ENCODE measurements at regions of chr4 and their contacts with region 1.

Region 1: DNA sequence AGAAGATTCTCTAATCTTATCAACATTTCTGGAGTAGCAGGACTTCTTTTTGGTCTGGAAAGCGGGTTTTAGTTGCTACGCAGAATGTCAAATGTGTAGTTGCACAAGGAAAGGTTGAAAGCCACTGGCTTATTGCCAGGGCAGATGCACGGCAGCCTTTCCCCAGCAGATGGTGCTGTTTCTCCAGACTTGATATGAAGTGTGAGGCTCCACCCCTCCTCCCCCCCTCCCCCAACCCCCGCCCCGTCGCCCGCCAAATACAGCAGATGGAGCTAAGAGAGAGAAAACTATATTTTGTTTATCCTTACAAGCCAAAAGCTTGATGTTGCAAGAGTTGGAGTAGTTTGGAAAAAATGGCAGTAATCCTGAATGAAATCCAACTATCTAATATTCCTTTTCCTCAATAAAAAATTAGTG is 32.0 kb downstream of the ENOPH1 start:
- ATAC-seq: peak; percentile 73 to 90 (median 86)
- H3K4me3 ChIP-seq: no peak overlapping the region
- H3K27ac ChIP-seq: no peak overlapping the region
- H3K4me1 ChIP-seq: no peaks in the 10 kb centered on the region

Region 2: DNA sequence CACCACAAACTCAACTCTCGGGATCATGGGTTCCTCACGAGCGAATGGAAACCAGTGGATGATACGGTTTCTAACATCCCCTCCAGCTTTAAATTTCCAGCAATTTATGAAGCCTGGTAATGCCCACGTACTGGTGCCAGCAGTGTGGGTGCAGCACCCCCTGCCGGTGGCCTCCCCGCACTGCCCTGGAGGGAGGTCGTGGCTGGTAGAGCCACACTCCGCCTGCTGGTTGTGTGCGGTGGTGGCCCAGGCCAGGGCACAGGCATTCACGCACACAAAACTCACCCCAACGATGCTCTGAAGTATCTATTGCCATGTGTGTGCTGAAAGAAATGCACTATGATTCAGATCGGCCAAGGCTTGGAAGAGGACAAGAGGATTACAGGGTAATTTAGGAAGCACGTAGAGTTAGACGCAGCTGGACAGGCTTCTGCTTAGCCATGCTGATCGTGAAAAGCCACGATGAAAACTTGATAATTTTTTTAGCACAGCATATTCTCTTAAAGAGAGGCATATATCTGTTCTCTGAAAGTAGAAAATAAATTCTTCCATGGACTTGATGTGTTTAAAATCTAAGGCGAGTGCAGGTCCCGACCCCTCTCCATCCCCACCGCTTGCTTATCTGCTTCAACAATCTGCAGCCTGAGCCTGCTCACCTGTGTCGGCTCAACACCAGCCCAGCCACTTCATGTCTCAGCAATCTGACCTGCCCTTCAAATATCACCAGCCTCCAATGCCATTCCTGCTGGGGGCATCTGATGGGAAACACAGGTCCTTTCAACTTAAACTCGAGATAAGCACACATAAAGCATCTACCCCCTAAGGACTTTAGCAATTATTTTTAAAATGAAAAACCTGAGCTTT is 277.1 kb after region 1 on chr4:
- in situ Hi-C with region 1: loop called in 2 of 9 experiments (anchors 25 kb)
- ATAC-seq: peak; percentile 42 to 100 (median 78)
- H3K4me3 ChIP-seq: no peak overlapping the region
- H3K27ac ChIP-seq: no peak overlapping the region
- H3K4me1 ChIP-seq: peaks cover 0 to 5% of the 10 kb centered on the region in 2 donors

Region 3: GRCh38 chr4:82801910-82802521 is 339.6 kb after region 1 on chr4:
- in situ Hi-C with region 1: loop called in 1 of 9 experiments (anchors 10 kb)
- ATAC-seq: peak in 2 of 8 experiments; percentile 4 to 7
- H3K4me3 ChIP-seq: no peak overlapping the region
- H3K27ac ChIP-seq: no peak overlapping the region
- H3K4me1 ChIP-seq: peaks cover 8 to 9% of the 10 kb centered on the region in 2 donors

Region 4: GRCh38 chr4:82851885-82852750 is 389.7 kb after region 1 on chr4:
- in situ Hi-C with region 1: loop called in 1 of 9 experiments (anchors 25 kb)
- ATAC-seq: peak in 3 of 8 experiments; percentile 38 to 50 (median 39)
- H3K4me3 ChIP-seq: no peak overlapping the region
- H3K27ac ChIP-seq: no peak overlapping the region
- H3K4me1 ChIP-seq: no peaks in the 10 kb centered on the region

Measured in motor neuron (in vitro differentiated cells).